Upper lobe of right lung (tissue), 1 donor: ENCODE measurements at regions of chr9 and their contacts with region 1.

Region 1: DNA sequence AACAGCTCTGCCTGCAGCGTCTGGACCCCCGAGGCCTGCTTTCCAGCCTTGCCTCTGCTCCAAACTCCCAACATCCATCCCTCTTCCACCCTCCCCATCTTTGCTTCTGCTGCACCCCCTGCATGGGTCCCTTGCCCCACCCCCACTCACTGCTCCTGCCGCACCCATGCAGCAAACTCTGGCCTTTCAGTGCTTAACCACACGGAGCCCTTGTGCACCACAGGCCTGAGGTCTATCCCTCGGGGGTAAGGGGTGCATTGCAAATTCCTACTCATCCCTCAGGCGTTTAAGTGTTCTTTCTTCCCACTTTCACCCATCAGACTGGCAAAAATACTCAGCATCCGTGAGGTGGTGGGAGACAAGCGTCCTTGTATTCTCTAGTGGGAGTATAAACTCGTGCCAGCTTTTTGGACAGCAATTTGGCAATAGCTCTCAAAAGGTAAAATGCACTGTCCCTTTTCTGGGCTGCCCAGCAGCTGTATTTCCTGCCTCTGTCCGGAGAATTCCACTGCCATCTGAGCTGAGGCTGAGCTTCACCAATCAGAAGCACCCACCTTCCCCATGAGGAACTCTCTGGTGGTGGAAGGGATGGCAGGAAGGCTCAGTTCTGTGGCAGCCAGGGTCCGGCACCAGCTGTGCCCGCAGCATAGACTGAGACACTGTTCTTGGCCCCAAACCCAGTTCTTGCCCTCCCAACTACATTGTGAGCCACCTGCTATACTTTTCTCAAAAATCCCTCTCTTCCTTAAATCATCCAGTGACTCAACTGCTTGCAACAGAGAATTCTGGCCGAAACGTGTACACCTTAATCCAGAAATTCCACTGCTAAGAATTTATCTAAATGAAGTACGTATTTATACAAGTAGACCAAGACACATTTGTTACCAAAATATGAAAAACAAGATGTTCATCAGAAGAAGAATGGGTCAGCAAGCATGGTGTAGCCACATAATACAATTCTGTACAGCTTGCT is 15.0 kb downstream of the PSMB7 start:
- DNase-seq: no peak
- ATAC-seq: no peak
- H3K4me3 ChIP-seq: no peak overlapping the region
- H3K27ac ChIP-seq: no peak overlapping the region
- H3K4me1 ChIP-seq: peaks cover 5% of the 10 kb centered on the region
- H3K27me3 ChIP-seq: no peaks in the 10 kb centered on the region
- CTCF ChIP-seq: no peak

Region 2: GRCh38 chr9:123710299-123710698 is 690.0 kb before region 1 on chr9:
- intact Hi-C with region 1: no loop called
- DNase-seq: no peak
- ATAC-seq: no peak
- H3K4me3 ChIP-seq: no peak overlapping the region
- H3K27ac ChIP-seq: no peak overlapping the region
- H3K4me1 ChIP-seq: no peaks in the 10 kb centered on the region
- H3K27me3 ChIP-seq: no peaks in the 10 kb centered on the region
- CTCF ChIP-seq: no peak

Region 3: GRCh38 chr9:124342776-124343485 is 57.3 kb before region 1 on chr9:
- intact Hi-C with region 1: loop called (anchors 10 kb)
- DNase-seq: no peak
- ATAC-seq: peak; percentile 23
- H3K4me3 ChIP-seq: no peak overlapping the region
- H3K27ac ChIP-seq: peak overlapping the region; percentile 51
- H3K4me1 ChIP-seq: no peaks in the 10 kb centered on the region
- H3K27me3 ChIP-seq: no peaks in the 10 kb centered on the region
- CTCF ChIP-seq: no peak